Left ventricle myocardium superior (tissue), 1 donor: ENCODE measurements at regions of chr18 and their contacts with region 1.

Region 1: GRCh38 chr18:45664824-45665763 is 49.8 kb downstream of the SLC14A2 start:
- DNase-seq: no peak
- ATAC-seq: peak; percentile 79

Region 2: GRCh38 chr18:45764000-45764686 is 99.0 kb after region 1 on chr18:
- intact Hi-C with region 1: no loop called
- DNase-seq: no peak
- ATAC-seq: no peak

Region 3: GRCh38 chr18:45879681-45880655 is 214.9 kb after region 1 on chr18:
- intact Hi-C with region 1: loop called (anchors 10 kb)
- DNase-seq: peak; percentile 84
- ATAC-seq: peak; percentile 94